Activated CD4-positive, alpha-beta memory T cell treated with anti-CD3 and anti-CD28 coated beads, Interleukin-2, amount 10 ng/mL, durations not matched to agents 7 days and 5 days (primary cell): ENCODE measurements at regions of chr6 and their contacts with region 1.

Region 1: DNA sequence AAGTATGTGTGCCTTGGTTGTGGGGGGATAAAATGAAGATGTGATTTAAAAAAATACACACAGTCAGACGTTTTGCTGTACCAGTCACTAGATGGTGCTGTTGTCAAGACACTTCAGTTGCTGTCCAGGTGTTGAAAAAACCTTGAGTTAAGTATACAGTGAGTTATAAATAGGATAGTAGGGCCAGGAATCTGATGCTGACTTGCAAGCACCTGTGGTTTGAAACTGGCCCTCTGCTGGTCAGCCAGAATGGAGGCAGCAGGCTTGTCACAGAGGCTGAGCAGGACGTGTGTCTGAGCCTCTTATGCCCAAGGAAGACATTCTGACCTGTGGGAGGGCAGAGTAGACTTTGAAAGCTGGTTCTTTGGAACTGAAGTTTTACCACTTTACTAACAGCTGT is 27.8 kb downstream of the RNF8 start:
- DNase-seq: peak; percentile 34
- H3K4me3 Mint-ChIP-seq: no peak overlapping the region
- H3K27ac Mint-ChIP-seq: no peak overlapping the region
- H3K4me1 Mint-ChIP-seq: no peaks in the 10 kb centered on the region
- H3K27me3 Mint-ChIP-seq: no peaks in the 10 kb centered on the region

Region 2: GRCh38 chr6:37371154-37372083 is 10.2 kb before region 1 on chr6:
- CTCF ChIA-PET with region 1: interaction called, 10 read pairs
- POLR2A ChIA-PET with region 1: interaction called, 3 read pairs
- DNase-seq: no peak
- H3K4me3 Mint-ChIP-seq: no peak overlapping the region
- H3K27ac Mint-ChIP-seq: no peak overlapping the region
- H3K4me1 Mint-ChIP-seq: peaks cover 9% of the 10 kb centered on the region
- H3K27me3 Mint-ChIP-seq: no peaks in the 10 kb centered on the region